Caki2 (cell line): ENCODE measurements at regions of chr18 and their contacts with region 1.

Region 1: DNA sequence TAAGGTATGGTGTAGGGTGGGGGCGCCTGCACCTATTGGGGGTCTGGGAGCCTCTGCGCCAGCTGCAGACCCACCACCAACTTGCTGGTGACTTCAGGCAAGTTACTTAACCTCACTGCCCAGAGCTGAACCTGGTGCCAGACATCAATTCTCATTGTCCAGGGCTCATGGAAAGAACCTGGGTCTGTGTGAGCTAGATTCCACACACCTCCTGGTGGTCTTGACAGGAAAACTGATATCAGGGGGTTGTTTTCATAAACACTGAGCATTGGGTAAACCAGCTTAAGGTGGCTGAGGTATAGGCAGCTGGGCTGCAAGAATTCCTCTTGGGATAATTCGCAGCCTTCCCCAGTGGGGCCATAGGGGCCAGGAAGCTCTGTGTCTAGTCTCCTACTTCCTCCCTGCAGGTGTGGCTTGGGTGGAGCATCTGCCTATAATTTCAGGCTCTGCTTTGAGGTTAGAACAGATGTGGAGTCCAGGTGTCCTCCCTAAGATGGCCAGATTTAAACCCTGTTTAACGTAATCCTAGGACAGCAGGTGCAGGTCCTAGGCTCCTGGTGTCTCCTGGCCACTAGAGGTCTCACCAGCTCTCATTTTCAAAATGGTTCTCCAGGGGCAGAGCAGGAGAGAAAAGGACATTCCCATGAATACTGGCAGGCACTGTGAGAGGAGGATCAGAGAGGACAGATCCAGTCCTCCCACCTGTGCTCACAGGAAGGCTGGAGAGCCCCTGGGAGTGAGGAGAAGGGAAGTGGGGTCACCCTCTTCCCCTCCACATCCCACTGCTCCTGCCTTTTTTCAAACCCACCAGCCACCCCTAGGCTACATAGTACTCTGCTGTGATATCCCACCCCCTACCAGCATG is 100.4 kb upstream of the SMAD2 start:
- DNase-seq: peak; percentile 40

Region 2: GRCh38 chr18:48445540-48445939 is 414.7 kb after region 1 on chr18:
- in situ Hi-C with region 1: loop called (anchors 25 kb)
- DNase-seq: peak; percentile 37